Astrocyte of the cerebellum (primary cell): ENCODE measurements at regions of chr12 and their contacts with region 1.

Region 1: GRCh38 chr12:50283229-50283923 is at the start of gene LIMA1:
- DNase-seq: peak; percentile 48
- H3K4me3 ChIP-seq: peak within 1 kb of the TSS; percentile 97
- CTCF ChIP-seq: no peak

Region 2: DNA sequence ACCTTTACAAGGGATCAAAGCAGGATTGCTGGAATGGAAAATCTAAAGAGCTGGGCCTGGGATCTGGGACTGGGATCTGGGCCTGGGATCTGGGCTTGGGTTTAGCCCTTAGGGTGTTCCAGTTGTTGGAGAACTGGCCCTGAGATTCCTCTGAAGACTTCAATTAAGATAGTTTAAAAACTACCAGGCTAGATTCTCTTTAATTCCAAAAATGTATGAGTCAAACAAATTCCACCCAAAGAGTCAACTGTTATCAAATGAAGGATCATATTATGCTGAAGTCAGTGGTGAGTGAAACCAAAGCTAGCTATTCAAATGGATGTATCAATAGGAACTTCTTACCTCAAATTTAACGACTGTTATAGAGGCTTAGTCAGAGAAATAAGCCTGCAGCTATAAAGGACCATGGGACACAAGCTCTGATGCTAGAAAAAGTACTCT is 40.6 kb before region 1 on chr12:
- in situ Hi-C with region 1: loop called (anchors 5 kb)
- DNase-seq: no peak
- H3K4me3 ChIP-seq: no peak overlapping the region
- CTCF ChIP-seq: no peak